ENCODE measurements at regions of chr14 and their contacts with region 1.

Region 1: GRCh38 chr14:63276492-63277342 is 42.0 kb downstream of the GPHB5 start:
- DNase-seq: no peak
- H3K4me3 ChIP-seq: no peak overlapping the region
- H3K27ac ChIP-seq: no peak overlapping the region
- H3K4me1 ChIP-seq: peaks cover 21% of the 10 kb centered on the region
- H3K27me3 ChIP-seq: no peaks in the 10 kb centered on the region
- CTCF ChIP-seq: peak; percentile 63 to 87 (median 70)
- POLR2A ChIP-seq: no peak

Region 2: GRCh38 chr14:63174760-63175211 is 101.9 kb before region 1 on chr14:
- intact Hi-C with region 1: loop called (anchors 5 kb)
- DNase-seq: no peak
- H3K4me3 ChIP-seq: no peak overlapping the region
- H3K27ac ChIP-seq: no peak overlapping the region
- H3K4me1 ChIP-seq: peaks cover 29% of the 10 kb centered on the region
- H3K27me3 ChIP-seq: no peaks in the 10 kb centered on the region
- CTCF ChIP-seq: peak; percentile 32 to 66 (median 59)
- POLR2A ChIP-seq: no peak